Endothelial cell of umbilical vein (primary cell): ENCODE measurements at regions of chr3 and their contacts with region 1.

Region 1: DNA sequence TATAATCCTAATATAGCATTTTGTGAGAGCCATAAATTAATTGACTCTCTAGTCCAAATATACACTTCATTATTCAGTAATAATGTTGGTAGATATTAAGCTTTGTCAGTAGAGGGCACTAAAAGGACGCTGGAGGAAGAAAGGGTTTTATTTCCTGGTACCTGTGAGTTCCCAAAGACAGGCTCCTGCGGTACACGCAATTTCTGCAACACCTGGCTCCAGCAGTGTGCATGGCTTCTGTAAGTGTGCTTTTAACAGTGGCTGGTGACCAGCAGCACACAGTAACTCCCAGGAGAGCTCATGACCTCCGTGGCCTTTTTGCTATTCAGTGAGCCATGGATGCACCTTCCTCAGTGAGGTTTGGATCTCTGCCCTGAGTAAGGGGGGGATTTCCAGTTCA is 338.3 kb upstream of the ZNF385D start:
- DNase-seq: peak; percentile 6
- H3K4me3 ChIP-seq: no peak overlapping the region
- H3K27ac ChIP-seq: no peak overlapping the region
- H3K4me1 ChIP-seq: no peaks in the 10 kb centered on the region
- H3K27me3 ChIP-seq: no peaks in the 10 kb centered on the region
- CTCF ChIP-seq: peak in 1 of 2 donors; percentile 30
- POLR2A ChIP-seq: no peak

Region 2: GRCh38 chr3:21912711-21913110 is 176.6 kb before region 1 on chr3:
- CTCF ChIA-PET with region 1: no interaction called
- POLR2A ChIA-PET with region 1: no interaction called
- dilution Hi-C with region 1: no loop called
- intact Hi-C with region 1: no loop called
- DNase-seq: no peak
- H3K4me3 ChIP-seq: no peak overlapping the region
- H3K27ac ChIP-seq: no peak overlapping the region
- H3K4me1 ChIP-seq: no peaks in the 10 kb centered on the region
- H3K27me3 ChIP-seq: no peaks in the 10 kb centered on the region
- CTCF ChIP-seq: no peak
- POLR2A ChIP-seq: no peak

Region 3: GRCh38 chr3:22555753-22556435 is 466.6 kb after region 1 on chr3:
- CTCF ChIA-PET with region 1: no interaction called
- POLR2A ChIA-PET with region 1: no interaction called
- dilution Hi-C with region 1: no loop called
- intact Hi-C with region 1: loop called (anchors 5 kb)
- DNase-seq: no peak
- H3K4me3 ChIP-seq: no peak overlapping the region
- H3K27ac ChIP-seq: no peak overlapping the region
- H3K4me1 ChIP-seq: no peaks in the 10 kb centered on the region
- H3K27me3 ChIP-seq: no peaks in the 10 kb centered on the region
- CTCF ChIP-seq: no peak
- POLR2A ChIP-seq: no peak